Naive thymus-derived CD4-positive, alpha-beta T cell (primary cell): ENCODE measurements at regions of chr5 and their contacts with region 1.

Region 1: DNA sequence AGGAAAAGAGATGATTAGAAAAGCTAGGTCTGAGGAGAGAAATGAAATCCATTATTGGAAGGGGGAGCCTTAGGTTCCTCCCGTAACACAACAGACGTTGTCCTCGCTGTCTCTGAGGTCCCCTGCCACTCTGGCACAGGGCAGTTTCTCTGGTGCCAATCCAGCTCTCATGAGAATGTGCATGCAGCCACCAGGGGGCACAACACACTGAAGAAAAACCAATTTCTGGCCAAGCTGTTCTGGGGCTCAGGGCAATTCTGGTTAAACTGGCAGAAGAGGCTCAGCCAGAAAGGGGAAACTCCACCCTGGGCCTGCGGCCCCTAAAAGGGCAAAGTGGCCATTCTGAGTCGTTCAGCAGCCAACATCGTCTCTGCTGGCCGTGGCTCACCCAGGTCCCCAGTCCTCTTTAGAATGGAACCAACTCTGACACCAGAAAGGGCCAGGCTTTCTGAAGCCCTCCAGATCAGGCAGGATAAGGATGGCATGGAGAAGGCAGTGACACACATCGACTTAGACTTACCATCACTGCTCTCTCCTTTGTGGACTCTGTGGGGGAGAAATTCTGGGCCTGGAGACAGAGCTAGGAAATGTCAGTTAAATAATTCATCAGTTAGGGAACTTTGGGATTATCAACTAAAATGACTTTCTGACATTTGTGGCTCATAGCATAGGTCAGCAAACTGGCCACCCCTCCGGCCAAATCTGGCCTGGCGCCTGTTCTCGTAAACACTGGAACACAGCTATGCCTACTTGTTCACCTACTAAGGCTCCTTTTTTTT is 58.5 kb upstream of the GOLPH3 start:
- DNase-seq: peak; percentile 45 to 73 (median 64)
- ATAC-seq: peak; percentile 88
- H3K4me3 ChIP-seq: no peak overlapping the region
- H3K4me3 Mint-ChIP-seq: no peak overlapping the region
- H3K27ac ChIP-seq: no peak overlapping the region
- H3K27ac Mint-ChIP-seq: peak overlapping the region; percentile 45 to 71 (median 62)
- H3K4me1 ChIP-seq: no peaks in the 10 kb centered on the region
- H3K4me1 Mint-ChIP-seq: peaks cover 0 to 12% (median 7%) of the 10 kb centered on the region in 7 donors
- H3K27me3 ChIP-seq: no peaks in the 10 kb centered on the region
- H3K27me3 Mint-ChIP-seq: no peaks in the 10 kb centered on the region

Region 2: GRCh38 chr5:32489791-32490582 is 257.4 kb after region 1 on chr5:
- CTCF ChIA-PET with region 1: interaction called, 4 read pairs
- POLR2A ChIA-PET with region 1: no interaction called
- intact Hi-C with region 1: loop called in 1 of 2 experiments (anchors 5 kb)
- DNase-seq: peak; percentile 40 to 72 (median 64)
- ATAC-seq: peak; percentile 82
- H3K4me3 ChIP-seq: no peak overlapping the region
- H3K4me3 Mint-ChIP-seq: no peak overlapping the region
- H3K27ac ChIP-seq: no peak overlapping the region
- H3K27ac Mint-ChIP-seq: peak overlapping the region in 4 of 9 donors; percentile 11 to 56 (median 31)
- H3K4me1 ChIP-seq: no peaks in the 10 kb centered on the region
- H3K4me1 Mint-ChIP-seq: peaks cover 0 to 11% (median 7%) of the 10 kb centered on the region in 7 donors
- H3K27me3 ChIP-seq: no peaks in the 10 kb centered on the region
- H3K27me3 Mint-ChIP-seq: no peaks in the 10 kb centered on the region

Region 3: DNA sequence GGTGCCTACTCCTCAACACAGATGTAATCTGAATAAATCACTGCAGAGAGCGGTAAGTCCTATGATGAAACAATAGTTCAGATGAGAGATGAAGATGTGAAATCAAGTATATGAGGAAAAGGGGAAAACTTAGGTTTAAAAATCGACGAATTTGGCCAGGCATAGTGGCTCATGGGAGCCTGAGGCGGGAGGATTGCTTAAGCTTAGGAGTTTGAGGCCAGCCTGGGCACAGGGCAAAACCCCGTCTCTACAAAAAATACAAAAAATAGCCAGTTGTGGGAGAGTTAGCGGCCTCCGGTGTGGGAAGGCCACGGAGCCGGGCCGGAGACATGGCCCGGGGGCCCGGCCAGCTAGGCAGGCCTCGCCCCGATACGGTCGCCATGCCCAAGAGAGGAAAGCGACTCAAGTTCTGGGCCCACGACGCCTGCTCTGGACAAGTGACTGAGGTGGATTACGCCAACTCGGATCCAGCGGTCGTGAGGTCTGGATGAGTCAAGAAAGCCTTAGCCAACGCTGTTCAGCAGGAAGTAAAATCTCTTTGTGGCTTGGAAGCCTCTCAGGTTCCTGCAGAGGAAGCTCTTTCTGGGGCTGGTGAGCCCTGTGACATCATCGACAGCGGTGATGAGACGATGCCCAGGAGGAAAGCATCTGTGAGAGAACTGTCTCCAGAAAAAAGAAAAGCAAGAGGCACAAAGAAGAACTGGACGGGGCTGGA is 290.0 kb after region 1 on chr5:
- CTCF ChIA-PET with region 1: no interaction called
- POLR2A ChIA-PET with region 1: no interaction called
- intact Hi-C with region 1: no loop called
- DNase-seq: peak in 7 of 9 donors; percentile 18 to 56 (median 38)
- ATAC-seq: peak; percentile 93
- H3K4me3 ChIP-seq: no peak overlapping the region
- H3K4me3 Mint-ChIP-seq: peak overlapping the region in 7 of 10 donors; percentile 1 to 75 (median 64)
- H3K27ac ChIP-seq: no peak overlapping the region
- H3K27ac Mint-ChIP-seq: peak overlapping the region in 7 of 9 donors; percentile 11 to 89 (median 37)
- H3K4me1 ChIP-seq: no peaks in the 10 kb centered on the region
- H3K4me1 Mint-ChIP-seq: peaks cover 7 to 40% (median 17%) of the 10 kb centered on the region in 7 donors
- H3K27me3 ChIP-seq: no peaks in the 10 kb centered on the region
- H3K27me3 Mint-ChIP-seq: peaks cover 0 to 9% (median 0%) of the 10 kb centered on the region in 5 donors

Region 4: DNA sequence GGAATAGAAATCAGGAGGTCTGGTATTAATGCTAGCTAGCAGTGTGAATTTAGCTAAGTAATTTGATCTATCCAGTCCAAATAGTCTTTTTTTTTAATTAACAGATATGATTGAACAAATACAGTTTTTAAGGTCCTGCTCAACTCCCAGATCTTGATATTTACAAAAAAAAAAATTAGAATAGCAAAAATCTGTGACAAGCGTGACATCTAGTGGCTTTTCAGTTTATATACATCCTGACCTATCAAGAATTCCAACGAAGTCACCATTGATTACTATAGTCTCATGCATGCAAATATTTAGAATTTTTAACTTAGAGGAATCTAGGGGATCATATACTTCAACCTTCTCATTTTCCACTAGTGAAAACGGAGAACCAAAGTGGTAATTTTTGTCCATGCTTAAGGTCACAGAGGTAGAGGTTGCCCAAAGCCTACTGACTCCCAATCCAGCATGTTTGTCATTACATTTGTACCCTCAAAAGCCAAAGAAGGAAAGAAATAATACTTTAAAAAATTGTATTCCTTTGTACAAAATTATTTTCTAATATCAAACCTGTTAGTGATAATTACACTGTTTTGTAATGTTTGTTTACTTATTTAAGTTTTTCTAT is 1190.5 kb after region 1 on chr5:
- CTCF ChIA-PET with region 1: no interaction called
- POLR2A ChIA-PET with region 1: no interaction called
- intact Hi-C with region 1: loop called in 1 of 2 experiments (anchors 5 kb)
- DNase-seq: no peak
- ATAC-seq: no peak
- H3K4me3 ChIP-seq: no peak overlapping the region
- H3K4me3 Mint-ChIP-seq: no peak overlapping the region
- H3K27ac ChIP-seq: no peak overlapping the region
- H3K27ac Mint-ChIP-seq: no peak overlapping the region
- H3K4me1 ChIP-seq: no peaks in the 10 kb centered on the region
- H3K4me1 Mint-ChIP-seq: peaks cover 0 to 2% (median 0%) of the 10 kb centered on the region in 7 donors
- H3K27me3 ChIP-seq: no peaks in the 10 kb centered on the region
- H3K27me3 Mint-ChIP-seq: peaks cover 10 to 14% (median 12%) of the 10 kb centered on the region in 5 donors